ENCODE measurements at regions of chr10 and their contacts with region 1.

Region 1: GRCh38 chr10:99532687-99533495 is at the start of gene NKX2-3:
- DNase-seq: peak; percentile 95 to 98
- H3K4me3 ChIP-seq: peak within 1 kb of the TSS; percentile 45
- H3K4me1 ChIP-seq: peaks cover 28% of the 10 kb centered on the region
- H3K27me3 ChIP-seq: no peaks in the 10 kb centered on the region

Region 2: DNA sequence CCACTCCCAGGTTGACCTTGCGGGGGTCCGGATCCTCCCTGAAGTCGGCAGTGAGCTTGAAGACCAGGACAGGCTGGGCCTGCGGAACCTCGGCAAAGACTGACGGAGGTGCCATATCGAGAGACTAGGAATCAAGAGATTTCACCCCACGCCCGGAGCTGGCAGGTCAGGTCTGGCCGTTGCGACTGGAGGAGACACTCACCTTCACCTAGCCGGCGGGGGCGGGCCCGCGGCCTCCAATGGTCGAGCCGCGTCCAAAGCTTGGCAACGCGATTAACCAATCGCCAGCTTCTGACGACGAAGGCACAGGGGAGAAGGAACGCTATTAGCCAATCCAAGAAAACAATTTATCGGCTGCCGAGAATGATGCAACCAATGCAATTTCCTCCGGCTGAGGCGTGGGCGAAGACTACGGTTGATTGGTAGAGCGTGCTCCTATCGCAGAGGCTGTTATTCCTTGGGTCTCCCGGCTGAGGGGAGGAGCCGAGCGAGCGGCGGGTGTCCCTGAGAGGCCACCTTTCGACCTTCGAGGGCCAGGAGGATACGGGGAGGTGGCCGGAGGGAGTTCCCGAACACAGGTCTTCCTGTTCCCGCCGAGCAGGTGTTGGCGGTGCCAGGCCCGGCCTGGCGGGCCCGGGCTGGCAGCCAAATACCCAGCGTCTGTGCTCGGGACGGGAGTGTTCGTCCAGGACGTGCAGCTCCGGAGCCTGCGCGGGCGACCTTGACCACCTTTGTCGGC is 102.3 kb before region 1 on chr10 and contains the start of gene GOT1:
- in situ Hi-C with region 1: loop called (anchors 5 kb)
- DNase-seq: peak; percentile 95 to 99
- H3K4me3 ChIP-seq: peak within 1 kb of the TSS; percentile 89
- H3K4me1 ChIP-seq: peaks cover 9% of the 10 kb centered on the region
- H3K27me3 ChIP-seq: no peaks in the 10 kb centered on the region

Region 3: GRCh38 chr10:99582255-99582770 is 49.4 kb after region 1 on chr10:
- in situ Hi-C with region 1: no loop called
- DNase-seq: no peak
- H3K4me3 ChIP-seq: no peak overlapping the region
- H3K4me1 ChIP-seq: no peaks in the 10 kb centered on the region
- H3K27me3 ChIP-seq: no peaks in the 10 kb centered on the region